ENCODE measurements at regions of chrX and their contacts with region 1.

Region 1: DNA sequence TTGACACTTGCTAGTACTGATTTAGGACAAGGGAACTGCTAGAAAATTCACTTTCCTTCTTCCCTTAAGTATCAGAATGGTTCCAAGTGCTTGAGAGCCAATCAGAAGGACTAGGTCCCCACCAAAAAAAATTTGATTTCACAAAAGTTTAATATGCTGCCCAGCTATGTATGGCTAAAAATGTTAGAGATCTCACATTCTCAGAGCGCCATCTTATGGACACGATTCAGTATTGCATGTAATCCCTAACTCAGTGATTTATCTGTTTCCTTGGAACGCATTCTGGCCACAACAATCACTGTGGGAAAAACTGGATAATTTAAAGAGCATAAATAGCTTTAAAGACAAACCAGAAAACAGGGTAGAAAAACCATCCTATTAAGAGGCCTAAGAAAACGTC is 255.1 kb upstream of the GPC4 start:
- DNase-seq: no peak
- H3K4me3 ChIP-seq: no peak overlapping the region
- CTCF ChIP-seq: peak; percentile 28

Region 2: DNA sequence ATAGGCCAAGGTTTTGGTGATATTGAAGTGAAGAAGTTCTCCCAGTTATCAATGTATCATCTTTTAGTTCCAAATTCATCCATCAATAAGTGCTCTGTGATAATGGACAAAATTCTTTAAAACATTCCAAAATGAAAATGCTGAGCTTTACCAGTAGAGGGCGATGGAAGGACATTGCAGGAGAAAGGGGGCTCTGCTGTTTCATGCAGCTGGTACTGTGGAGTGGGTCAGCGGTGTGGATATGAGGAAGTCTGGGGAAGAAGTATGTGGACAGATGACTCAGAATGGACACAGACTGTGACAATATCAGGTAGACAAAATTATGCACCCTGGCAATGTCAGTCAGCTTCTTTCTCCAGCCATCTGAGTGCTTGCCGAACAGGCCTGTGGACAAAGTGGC is 665.3 kb before region 1 on chrX:
- CTCF ChIA-PET with region 1: interaction called, 14 read pairs
- POLR2A ChIA-PET with region 1: no interaction called
- DNase-seq: no peak
- H3K4me3 ChIP-seq: no peak overlapping the region
- CTCF ChIP-seq: peak; percentile 53

Region 3: DNA sequence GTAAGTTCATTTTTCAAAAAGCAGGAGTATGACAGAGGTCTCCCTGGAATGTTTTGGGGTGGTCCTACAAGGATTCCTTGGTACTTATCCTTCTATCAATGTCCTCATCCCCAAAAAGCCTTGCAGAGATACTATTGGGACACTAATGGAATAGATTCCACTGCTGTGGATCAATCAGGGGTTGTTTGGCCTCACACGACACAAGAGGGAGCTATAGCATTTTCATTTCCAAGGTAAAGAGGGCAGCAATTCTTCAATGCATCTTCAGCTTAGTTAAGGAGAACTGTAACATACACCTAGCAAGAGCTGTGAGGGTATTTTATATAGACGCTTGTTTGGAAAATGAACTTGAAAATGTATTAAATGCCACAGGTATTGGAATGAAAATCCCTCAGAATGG is 624.4 kb before region 1 on chrX:
- CTCF ChIA-PET with region 1: interaction called, 14 read pairs
- POLR2A ChIA-PET with region 1: no interaction called
- DNase-seq: no peak
- H3K4me3 ChIP-seq: no peak overlapping the region
- CTCF ChIP-seq: no peak

Region 4: GRCh38 chrX:133335027-133335426 is 335.4 kb before region 1 on chrX:
- CTCF ChIA-PET with region 1: interaction called, 32 read pairs
- POLR2A ChIA-PET with region 1: no interaction called
- DNase-seq: no peak
- H3K4me3 ChIP-seq: no peak overlapping the region
- CTCF ChIP-seq: peak; percentile 39

Measured in AG04449 (cell line).